T-cell (primary cell): ENCODE measurements at regions of chr7 and their contacts with region 1.

Region 1: GRCh38 chr7:56199639-56200038 is 83.4 kb upstream of the NUPR2 start:
- DNase-seq: no peak
- ATAC-seq: no peak
- H3K4me3 ChIP-seq: no peak overlapping the region
- H3K4me3 Mint-ChIP-seq: no peak overlapping the region
- H3K27ac ChIP-seq: no peak overlapping the region
- H3K27ac Mint-ChIP-seq: no peak overlapping the region
- H3K4me1 ChIP-seq: no peaks in the 10 kb centered on the region
- H3K4me1 Mint-ChIP-seq: no peaks in the 10 kb centered on the region
- H3K27me3 ChIP-seq: no peaks in the 10 kb centered on the region
- H3K27me3 Mint-ChIP-seq: no peaks in the 10 kb centered on the region

Region 2: GRCh38 chr7:56079450-56080185 is 120.0 kb before region 1 on chr7:
- CTCF ChIA-PET with region 1: no interaction called
- POLR2A ChIA-PET with region 1: no interaction called
- DNase-seq: no peak
- ATAC-seq: no peak
- H3K4me3 ChIP-seq: no peak overlapping the region
- H3K4me3 Mint-ChIP-seq: no peak overlapping the region
- H3K27ac ChIP-seq: no peak overlapping the region
- H3K27ac Mint-ChIP-seq: peak overlapping the region in 1 of 2 donors; percentile 22
- H3K4me1 ChIP-seq: peaks cover 0 to under 1% of the 10 kb centered on the region in 2 experiments
- H3K4me1 Mint-ChIP-seq: no peaks in the 10 kb centered on the region
- H3K27me3 ChIP-seq: no peaks in the 10 kb centered on the region
- H3K27me3 Mint-ChIP-seq: no peaks in the 10 kb centered on the region

Region 3: DNA sequence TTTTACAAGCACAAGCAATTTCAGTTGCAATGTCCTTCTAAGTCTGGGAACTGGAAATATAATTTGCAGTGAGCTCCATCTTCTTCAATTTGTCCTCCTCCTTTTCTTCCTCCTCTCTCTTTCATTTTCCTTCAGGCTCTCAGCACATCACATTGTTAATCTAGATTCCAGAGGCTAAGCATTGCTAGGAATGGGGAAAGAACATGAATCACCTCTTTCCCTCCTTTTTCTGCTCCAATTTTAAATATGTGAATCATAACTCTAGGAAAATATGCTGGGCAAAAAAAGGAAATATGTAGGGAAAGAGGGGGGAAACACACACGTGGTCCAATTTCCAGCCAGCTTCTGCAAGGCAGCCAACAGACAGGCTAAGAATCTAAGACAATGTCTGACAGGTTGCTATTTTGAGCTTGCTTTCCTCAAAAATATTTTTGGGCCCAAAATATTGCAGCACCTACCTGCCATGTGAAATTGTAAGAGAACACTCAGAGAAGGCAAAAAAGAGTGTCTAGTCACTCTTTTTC is 10.8 kb before region 1 on chr7:
- CTCF ChIA-PET with region 1: interaction called in 1 of 2 experiments, 15 read pairs
- POLR2A ChIA-PET with region 1: no interaction called
- DNase-seq: no peak
- ATAC-seq: no peak
- H3K4me3 ChIP-seq: no peak overlapping the region
- H3K4me3 Mint-ChIP-seq: no peak overlapping the region
- H3K27ac ChIP-seq: no peak overlapping the region
- H3K27ac Mint-ChIP-seq: no peak overlapping the region
- H3K4me1 ChIP-seq: no peaks in the 10 kb centered on the region
- H3K4me1 Mint-ChIP-seq: no peaks in the 10 kb centered on the region
- H3K27me3 ChIP-seq: peaks cover 0 to 11% of the 10 kb centered on the region in 2 experiments
- H3K27me3 Mint-ChIP-seq: peaks cover 10 to 14% of the 10 kb centered on the region in 2 donors